ENCODE measurements at regions of chr12 and their contacts with region 1.

Region 1: DNA sequence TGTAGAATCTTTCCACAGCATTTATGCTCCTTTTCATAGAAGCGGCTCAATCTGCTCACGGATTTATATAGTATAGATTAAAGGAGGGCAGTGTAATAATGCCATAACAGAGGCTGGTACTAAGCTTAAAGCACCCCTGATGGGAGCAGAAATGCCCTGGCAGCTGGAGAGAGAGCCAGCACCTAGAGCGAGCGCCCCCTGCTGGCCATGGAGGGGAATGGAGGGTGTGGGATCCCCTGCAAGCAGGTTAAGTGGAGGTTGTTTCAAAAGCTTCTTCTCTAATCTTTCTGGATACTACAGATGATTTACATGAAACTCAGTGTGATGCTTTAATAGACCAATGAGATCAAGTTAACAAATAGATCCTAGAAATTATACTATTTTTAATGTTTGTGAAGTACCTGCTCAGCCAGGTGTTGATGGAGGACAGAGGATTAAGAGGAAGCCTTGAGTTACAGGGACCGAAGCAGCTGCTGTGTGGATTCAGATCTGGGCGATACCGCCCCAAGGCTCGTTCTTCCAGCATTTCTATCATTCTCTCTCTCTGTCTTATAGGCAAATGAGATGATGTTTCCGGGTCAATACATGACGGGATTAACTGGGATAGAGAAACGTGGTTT is 1519.3 kb upstream of the TMEM132C start:
- DNase-seq: peak; percentile 16
- ATAC-seq: peak; percentile 99
- H3K4me3 ChIP-seq: no peak overlapping the region
- H3K27ac ChIP-seq: no peak overlapping the region
- H3K4me1 ChIP-seq: no peaks in the 10 kb centered on the region
- H3K27me3 ChIP-seq: no peaks in the 10 kb centered on the region
- CTCF ChIP-seq: peak; percentile 28 to 98 (median 94); a peak in 4 of 6 replicates
- POLR2A ChIP-seq: no peak
- RAD21 ChIP-seq: peak; percentile 54

Region 2: DNA sequence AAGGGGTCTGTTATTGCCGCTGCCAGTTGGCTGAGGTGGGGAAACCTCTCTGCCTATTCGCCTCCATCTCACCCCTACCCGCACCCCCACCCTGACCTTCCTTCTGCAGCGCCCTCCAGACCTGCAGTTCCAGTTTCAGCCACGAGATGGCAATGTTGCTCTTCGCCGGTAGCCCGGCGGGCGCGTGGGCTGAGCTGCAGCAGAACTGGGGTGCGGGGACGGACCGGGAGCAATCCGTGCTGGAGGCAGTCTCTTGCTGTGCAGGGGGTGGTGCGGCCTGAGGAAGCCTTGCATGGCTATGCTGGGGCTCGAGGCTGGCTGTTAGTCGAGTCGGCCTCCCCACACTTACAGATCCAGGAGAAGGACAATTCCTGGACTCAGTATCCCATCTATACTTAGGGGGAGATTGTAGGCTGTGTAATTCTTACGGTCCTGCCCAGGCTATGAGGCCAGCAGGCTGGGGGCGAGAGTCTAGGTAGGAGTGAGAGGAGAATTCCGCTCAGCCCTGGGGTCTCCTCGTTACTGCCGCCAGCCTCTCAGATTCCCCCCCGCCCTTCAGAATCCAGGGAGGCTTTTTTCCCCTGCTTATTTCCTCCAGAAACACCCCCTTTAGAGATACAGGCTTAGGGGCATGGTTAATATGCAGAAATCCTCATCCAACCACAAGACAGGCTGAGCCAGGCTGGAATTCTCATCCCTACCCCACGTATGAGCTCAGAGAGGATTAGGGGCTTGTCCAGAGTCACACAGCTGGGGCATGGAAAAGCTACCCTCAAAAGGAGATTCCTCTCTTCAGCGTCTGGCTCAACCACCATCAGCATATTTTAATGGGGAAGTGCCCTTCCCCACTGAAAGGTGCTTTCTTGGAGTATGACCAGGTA is 1564.2 kb before region 1 on chr12:
- CTCF ChIA-PET with region 1: no interaction called
- POLR2A ChIA-PET with region 1: no interaction called
- RAD21 ChIA-PET with region 1: no interaction called
- intact Hi-C with region 1: loop called (anchors 5 kb)
- DNase-seq: peak; percentile 45
- ATAC-seq: peak; percentile 72
- H3K4me3 ChIP-seq: peak overlapping the region in 1 of 2 experiments; percentile 24; a peak in 1 of 4 replicates
- H3K27ac ChIP-seq: no peak overlapping the region
- H3K4me1 ChIP-seq: peaks cover 0 to 16% of the 10 kb centered on the region in 2 experiments; a peak in 2 of 4 replicates
- H3K27me3 ChIP-seq: peaks cover 11% of the 10 kb centered on the region; the same call in 1 of the 2 replicates
- CTCF ChIP-seq: peak; percentile 91 to 99 (median 97)
- POLR2A ChIP-seq: no peak
- RAD21 ChIP-seq: peak; percentile 98

Region 3: GRCh38 chr12:125533434-125534029 is 1214.1 kb before region 1 on chr12:
- CTCF ChIA-PET with region 1: no interaction called
- POLR2A ChIA-PET with region 1: no interaction called
- RAD21 ChIA-PET with region 1: no interaction called
- intact Hi-C with region 1: loop called (anchors 1 kb)
- DNase-seq: no peak
- ATAC-seq: peak; percentile 97
- H3K4me3 ChIP-seq: no peak overlapping the region
- H3K27ac ChIP-seq: no peak overlapping the region
- H3K4me1 ChIP-seq: no peaks in the 10 kb centered on the region
- H3K27me3 ChIP-seq: no peaks in the 10 kb centered on the region
- CTCF ChIP-seq: peak; percentile 36 to 86 (median 81); a peak in 5 of 6 replicates
- POLR2A ChIP-seq: no peak
- RAD21 ChIP-seq: peak; percentile 70

Region 4: GRCh38 chr12:126069549-126070165 is 678.0 kb before region 1 on chr12:
- CTCF ChIA-PET with region 1: no interaction called
- POLR2A ChIA-PET with region 1: no interaction called
- RAD21 ChIA-PET with region 1: no interaction called
- intact Hi-C with region 1: loop called (anchors 5 kb)
- DNase-seq: peak; percentile 45
- ATAC-seq: peak; percentile 60
- H3K4me3 ChIP-seq: no peak overlapping the region
- H3K27ac ChIP-seq: no peak overlapping the region
- H3K4me1 ChIP-seq: no peaks in the 10 kb centered on the region
- H3K27me3 ChIP-seq: no peaks in the 10 kb centered on the region
- CTCF ChIP-seq: peak; percentile 35 to 68 (median 52); a peak in 5 of 6 replicates
- POLR2A ChIP-seq: no peak
- RAD21 ChIP-seq: peak; percentile 66

Region 5: DNA sequence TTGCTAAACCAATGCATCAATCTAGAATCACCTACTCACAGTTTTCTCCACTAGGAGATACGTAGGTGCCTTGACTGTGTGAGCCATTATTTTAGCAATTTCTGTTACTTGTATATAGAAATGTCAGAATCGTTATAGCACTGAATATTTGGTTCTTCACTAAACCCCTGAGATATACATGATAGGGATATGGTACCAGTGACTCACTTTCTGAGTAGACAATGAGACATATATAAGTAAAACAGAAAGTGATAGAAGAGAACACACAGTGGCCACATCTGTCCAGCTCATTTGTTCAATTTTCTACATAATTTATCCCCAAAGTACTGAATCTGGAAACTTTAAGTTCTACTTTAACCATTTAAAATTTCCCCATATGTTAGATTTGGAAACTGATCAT is 13.8 kb after region 1 on chr12:
- CTCF ChIA-PET with region 1: interaction called, 10 read pairs
- POLR2A ChIA-PET with region 1: no interaction called
- RAD21 ChIA-PET with region 1: no interaction called
- intact Hi-C with region 1: no loop called
- DNase-seq: no peak
- ATAC-seq: no peak
- H3K4me3 ChIP-seq: no peak overlapping the region
- H3K27ac ChIP-seq: no peak overlapping the region
- H3K4me1 ChIP-seq: no peaks in the 10 kb centered on the region
- H3K27me3 ChIP-seq: no peaks in the 10 kb centered on the region
- CTCF ChIP-seq: no peak
- POLR2A ChIP-seq: no peak
- RAD21 ChIP-seq: no peak

Region 6: GRCh38 chr12:126772171-126772864 is 24.7 kb after region 1 on chr12:
- CTCF ChIA-PET with region 1: interaction called, 13 read pairs
- POLR2A ChIA-PET with region 1: no interaction called
- RAD21 ChIA-PET with region 1: no interaction called
- intact Hi-C with region 1: no loop called
- DNase-seq: peak; percentile 93
- ATAC-seq: peak; percentile 89
- H3K4me3 ChIP-seq: peak overlapping the region; percentile 64 to 82
- H3K27ac ChIP-seq: peak overlapping the region; percentile 51
- H3K4me1 ChIP-seq: peaks cover 0 to 13% of the 10 kb centered on the region in 2 experiments; a peak in 3 of 4 replicates
- H3K27me3 ChIP-seq: no peaks in the 10 kb centered on the region
- CTCF ChIP-seq: no peak
- POLR2A ChIP-seq: no peak
- RAD21 ChIP-seq: no peak

Region 7: DNA sequence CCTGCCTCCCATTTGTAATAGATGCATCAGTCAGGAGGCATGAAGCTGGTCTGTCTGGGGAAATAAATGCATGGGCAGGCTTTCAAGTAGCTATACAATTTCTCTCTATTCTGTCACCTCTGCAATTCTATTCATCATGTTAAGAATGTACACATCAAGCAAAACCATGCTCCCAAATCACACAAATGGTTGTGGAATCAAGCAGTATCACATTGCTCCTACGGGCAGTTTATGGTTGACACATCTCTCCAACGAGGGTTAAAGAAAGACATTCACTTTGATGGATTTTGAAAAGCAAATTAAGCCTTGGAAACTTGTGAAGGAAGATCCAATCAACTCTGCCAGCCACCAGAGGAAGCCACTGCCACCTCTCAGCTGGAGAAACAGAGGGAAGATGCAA is 241.9 kb after region 1 on chr12:
- CTCF ChIA-PET with region 1: no interaction called
- POLR2A ChIA-PET with region 1: no interaction called
- RAD21 ChIA-PET with region 1: no interaction called
- intact Hi-C with region 1: no loop called
- DNase-seq: no peak
- ATAC-seq: no peak
- H3K4me3 ChIP-seq: no peak overlapping the region
- H3K27ac ChIP-seq: no peak overlapping the region
- H3K4me1 ChIP-seq: no peaks in the 10 kb centered on the region
- H3K27me3 ChIP-seq: no peaks in the 10 kb centered on the region
- CTCF ChIP-seq: no peak
- POLR2A ChIP-seq: no peak
- RAD21 ChIP-seq: no peak

Measured in HCT116 (cell line).